ENCODE measurements at regions of chr12 and their contacts with region 1.

Region 1: GRCh38 chr12:54337280-54337842 is 12.4 kb downstream of the COPZ1 start:
- DNase-seq: no peak
- H3K4me3 ChIP-seq: no peak overlapping the region
- H3K27ac ChIP-seq: no peak overlapping the region
- H3K4me1 ChIP-seq: peaks cover 13% of the 10 kb centered on the region
- CTCF ChIP-seq: no peak

Region 2: GRCh38 chr12:54246011-54246641 is 91.2 kb before region 1 on chr12:
- CTCF ChIA-PET with region 1: no interaction called
- POLR2A ChIA-PET with region 1: interaction called, 10 read pairs
- intact Hi-C with region 1: no loop called
- DNase-seq: no peak
- H3K4me3 ChIP-seq: no peak overlapping the region
- H3K27ac ChIP-seq: no peak overlapping the region
- H3K4me1 ChIP-seq: peaks cover 7% of the 10 kb centered on the region
- CTCF ChIP-seq: no peak

Region 3: GRCh38 chr12:54324617-54325441 is 12.5 kb before region 1 on chr12 and contains the start of gene COPZ1:
- CTCF ChIA-PET with region 1: interaction called, 3 read pairs
- POLR2A ChIA-PET with region 1: interaction called, 15 read pairs
- intact Hi-C with region 1: no loop called
- DNase-seq: peak; percentile 99
- H3K4me3 ChIP-seq: peak within 1 kb of the TSS; percentile 72
- H3K27ac ChIP-seq: peak within 1 kb of the TSS; percentile 1
- H3K4me1 ChIP-seq: peaks cover 5% of the 10 kb centered on the region
- CTCF ChIP-seq: peak; percentile 94
- total RNA-seq, gene COPZ1: 77.5 and 86.0 TPM in 2 replicates